Natural killer cell (primary cell): ENCODE measurements at regions of chr13 and their contacts with region 1.

Region 1: GRCh38 chr13:41263261-41264027 is at the start of gene MTRF1:
- DNase-seq: peak; percentile 76 to 89
- ATAC-seq: peak; percentile 92 to 94 (median 93)
- H3K4me3 ChIP-seq: peak within 1 kb of the TSS; percentile 85
- H3K4me3 Mint-ChIP-seq: peak within 1 kb of the TSS; percentile 95
- H3K27ac ChIP-seq: peak within 1 kb of the TSS; percentile 81
- H3K27ac Mint-ChIP-seq: peak within 1 kb of the TSS; percentile 93 to 99
- H3K4me1 ChIP-seq: peaks cover 5% of the 10 kb centered on the region
- H3K4me1 Mint-ChIP-seq: peaks cover 14 to 15% of the 10 kb centered on the region in 2 donors
- H3K27me3 ChIP-seq: no peaks in the 10 kb centered on the region
- H3K27me3 Mint-ChIP-seq: no peaks in the 10 kb centered on the region
- CTCF ChIP-seq: no peak
- total RNA-seq, gene MTRF1: 20.3 to 24.1 (median 24.0) TPM

Region 2: DNA sequence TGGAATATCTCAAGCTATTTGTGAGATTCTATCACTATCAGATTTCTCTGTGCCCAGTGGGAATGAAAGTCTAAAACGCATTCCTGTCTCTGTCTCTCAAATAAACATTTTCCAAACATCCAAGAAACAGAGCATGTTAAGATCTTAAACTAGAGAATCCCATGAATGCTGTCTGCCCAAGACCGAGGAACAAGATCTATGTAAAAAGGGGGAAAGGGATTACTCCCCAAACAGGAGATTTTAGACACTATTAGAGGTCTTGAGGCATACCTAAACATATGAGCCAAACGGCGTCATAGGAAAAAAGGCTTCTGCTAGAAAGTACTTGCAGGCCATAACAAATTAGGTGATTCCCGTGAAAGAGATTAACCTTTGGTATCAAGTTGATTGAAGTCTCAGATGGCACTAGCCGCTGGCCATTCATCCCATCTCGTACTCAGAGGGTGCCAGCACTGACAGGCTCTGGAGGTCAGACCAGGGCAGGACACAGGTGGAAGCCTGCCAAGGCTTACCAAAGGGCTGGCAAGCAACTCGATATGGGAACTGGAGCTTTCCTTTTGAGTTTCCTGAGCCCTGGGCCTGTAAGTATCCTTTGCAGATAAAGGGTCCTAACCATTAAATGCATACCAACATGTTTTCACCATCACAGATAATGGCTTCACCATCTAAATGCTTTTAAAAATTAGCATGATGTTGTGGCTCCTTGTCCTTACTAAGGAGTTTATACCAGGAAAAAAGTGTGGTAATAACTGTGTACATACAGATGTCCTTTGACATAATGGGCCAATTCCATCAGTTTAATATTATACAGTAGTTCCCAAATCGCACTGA is 822.2 kb before region 1 on chr13:
- intact Hi-C with region 1: no loop called
- DNase-seq: no peak
- ATAC-seq: no peak
- H3K4me3 ChIP-seq: no peak overlapping the region
- H3K4me3 Mint-ChIP-seq: no peak overlapping the region
- H3K27ac ChIP-seq: no peak overlapping the region
- H3K27ac Mint-ChIP-seq: no peak overlapping the region
- H3K4me1 ChIP-seq: peaks cover 6% of the 10 kb centered on the region
- H3K4me1 Mint-ChIP-seq: peaks cover 9 to 12% of the 10 kb centered on the region in 2 donors
- H3K27me3 ChIP-seq: no peaks in the 10 kb centered on the region
- H3K27me3 Mint-ChIP-seq: peaks cover 0 to 3% of the 10 kb centered on the region in 2 donors
- CTCF ChIP-seq: no peak

Region 3: GRCh38 chr13:41049480-41050440 is 213.7 kb before region 1 on chr13:
- intact Hi-C with region 1: no loop called
- DNase-seq: no peak
- ATAC-seq: peak in 1 of 3 donors; percentile 37
- H3K4me3 ChIP-seq: no peak overlapping the region
- H3K4me3 Mint-ChIP-seq: no peak overlapping the region
- H3K27ac ChIP-seq: no peak overlapping the region
- H3K27ac Mint-ChIP-seq: peak overlapping the region in 1 of 2 donors; percentile 0
- H3K4me1 ChIP-seq: peaks cover 3% of the 10 kb centered on the region
- H3K4me1 Mint-ChIP-seq: peaks cover 12 to 14% of the 10 kb centered on the region in 2 donors
- H3K27me3 ChIP-seq: no peaks in the 10 kb centered on the region
- H3K27me3 Mint-ChIP-seq: no peaks in the 10 kb centered on the region
- CTCF ChIP-seq: no peak

Region 4: DNA sequence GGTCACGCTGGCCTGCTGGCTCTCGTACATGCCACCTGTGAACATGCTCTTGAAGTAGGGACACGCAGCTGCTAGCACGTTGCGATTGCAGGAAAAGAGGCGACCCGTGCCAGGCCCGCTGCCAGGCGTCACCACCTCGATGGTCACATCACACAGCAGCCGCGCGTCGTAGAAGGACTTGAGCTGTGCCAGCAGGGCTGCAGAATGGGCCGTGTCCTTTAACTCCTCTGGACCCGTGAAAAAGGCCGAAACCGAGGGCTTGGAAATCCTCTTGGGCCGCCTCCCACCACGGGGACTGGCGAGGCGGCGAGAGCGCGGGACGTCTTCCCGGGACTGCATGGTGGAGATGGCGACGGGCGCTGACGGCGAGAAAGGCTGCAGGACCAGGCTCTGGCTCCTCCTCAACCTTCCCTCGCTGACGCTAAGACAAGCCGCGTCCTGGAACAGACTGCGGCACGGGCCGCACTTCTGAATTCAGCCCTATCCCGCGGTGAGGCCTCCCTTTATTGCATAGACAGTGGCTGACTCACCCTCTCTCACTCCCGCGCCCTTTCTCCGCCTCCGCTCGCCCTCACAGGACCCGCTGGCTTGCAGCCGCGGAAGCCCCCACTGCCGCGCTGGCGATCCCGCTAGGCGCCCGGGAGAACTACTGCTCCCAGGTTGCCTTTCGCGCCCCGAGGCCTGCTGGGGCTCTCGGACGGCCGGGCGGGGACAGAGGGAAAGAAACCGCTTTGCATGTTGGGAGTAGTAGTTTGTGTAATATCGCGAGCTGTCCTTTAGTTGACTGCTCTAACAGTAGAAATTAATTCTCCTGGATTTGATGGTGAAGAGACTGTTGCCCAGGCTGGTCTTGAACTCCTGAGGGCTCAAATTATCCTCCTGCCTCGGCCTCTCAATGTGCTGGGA is 69.3 kb before region 1 on chr13 and contains the start of gene KBTBD7:
- intact Hi-C with region 1: loop called (anchors 1 kb)
- DNase-seq: peak; percentile 82 to 91
- ATAC-seq: peak; percentile 95 to 99 (median 98)
- H3K4me3 ChIP-seq: peak within 1 kb of the TSS; percentile 59
- H3K4me3 Mint-ChIP-seq: peak within 1 kb of the TSS; percentile 97
- H3K27ac ChIP-seq: peak within 1 kb of the TSS; percentile 22
- H3K27ac Mint-ChIP-seq: peak within 1 kb of the TSS; percentile 78 to 93
- H3K4me1 ChIP-seq: peaks cover 12% of the 10 kb centered on the region
- H3K4me1 Mint-ChIP-seq: peaks cover 26 to 28% of the 10 kb centered on the region in 2 donors
- H3K27me3 ChIP-seq: no peaks in the 10 kb centered on the region
- H3K27me3 Mint-ChIP-seq: no peaks in the 10 kb centered on the region
- CTCF ChIP-seq: no peak
- total RNA-seq, gene KBTBD7: 2.1 to 4.1 (median 3.8) TPM

Region 5: GRCh38 chr13:41310963-41311606 is 47.6 kb after region 1 on chr13 and contains the start of gene NAA16:
- intact Hi-C with region 1: loop called (anchors 5 kb)
- DNase-seq: peak; percentile 93 to 96
- ATAC-seq: peak; percentile 80 to 87 (median 84)
- H3K4me3 ChIP-seq: peak within 1 kb of the TSS; percentile 92
- H3K4me3 Mint-ChIP-seq: peak within 1 kb of the TSS; percentile 96
- H3K27ac ChIP-seq: peak within 1 kb of the TSS; percentile 77
- H3K27ac Mint-ChIP-seq: peak within 1 kb of the TSS; percentile 94 to 96
- H3K4me1 ChIP-seq: peaks cover 26% of the 10 kb centered on the region
- H3K4me1 Mint-ChIP-seq: peaks cover 37 to 41% of the 10 kb centered on the region in 2 donors
- H3K27me3 ChIP-seq: no peaks in the 10 kb centered on the region
- H3K27me3 Mint-ChIP-seq: no peaks in the 10 kb centered on the region
- CTCF ChIP-seq: no peak
- total RNA-seq, gene NAA16: 49.4 to 55.3 (median 53.1) TPM